ENCODE measurements at regions of chr22 and their contacts with region 1.

Region 1: GRCh38 chr22:22848364-22848866 is 39.2 kb upstream of the IGLL5 start:
- H3K4me3 ChIP-seq: no peak overlapping the region
- H3K27ac ChIP-seq: no peak overlapping the region
- H3K4me1 ChIP-seq: no peaks in the 10 kb centered on the region
- CTCF ChIP-seq: peak; percentile 81

Region 2: GRCh38 chr22:22687638-22688500 is 160.5 kb before region 1 on chr22:
- CTCF ChIA-PET with region 1: no interaction called
- POLR2A ChIA-PET with region 1: no interaction called
- H3K4me3 ChIP-seq: no peak overlapping the region
- H3K27ac ChIP-seq: no peak overlapping the region
- H3K4me1 ChIP-seq: no peaks in the 10 kb centered on the region
- CTCF ChIP-seq: peak; percentile 46; the same call in 1 of the 2 replicates

Region 3: GRCh38 chr22:22730655-22731373 is 117.6 kb before region 1 on chr22:
- CTCF ChIA-PET with region 1: no interaction called
- POLR2A ChIA-PET with region 1: no interaction called
- H3K4me3 ChIP-seq: no peak overlapping the region
- H3K27ac ChIP-seq: no peak overlapping the region
- H3K4me1 ChIP-seq: no peaks in the 10 kb centered on the region
- CTCF ChIP-seq: no peak

Region 4: DNA sequence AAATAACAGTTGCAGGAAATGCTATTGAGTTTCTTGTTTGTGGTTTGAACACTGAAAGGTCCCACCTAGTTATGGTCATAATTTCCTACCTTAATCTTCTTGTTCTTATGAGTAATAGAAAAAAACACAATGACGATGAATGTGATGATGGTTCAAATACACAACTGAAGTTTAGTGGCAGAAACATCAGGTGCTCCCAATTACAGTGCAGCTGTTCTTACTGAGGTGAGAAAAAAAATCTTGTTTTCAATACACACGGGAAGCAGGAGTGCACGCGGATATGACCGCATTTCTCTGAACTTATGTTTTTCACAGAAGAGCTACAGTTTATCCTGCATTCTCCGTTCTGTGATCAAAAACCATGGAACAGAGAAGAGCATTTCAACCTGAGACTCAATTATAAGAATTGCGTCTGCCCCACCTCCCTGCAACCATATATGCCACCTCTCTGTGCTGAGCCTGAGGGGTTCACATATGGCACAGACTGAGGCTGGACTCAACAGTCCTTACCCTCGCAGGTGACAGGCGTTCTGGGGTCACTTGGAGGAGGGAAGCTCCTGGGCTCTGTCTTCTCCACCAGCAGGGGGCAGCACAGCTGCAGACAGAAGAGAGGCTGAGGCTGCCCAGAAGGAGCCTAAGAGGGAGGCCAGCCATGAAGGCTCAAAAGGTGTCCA is 60.5 kb before region 1 on chr22:
- CTCF ChIA-PET with region 1: interaction called, 37 read pairs
- POLR2A ChIA-PET with region 1: no interaction called
- H3K4me3 ChIP-seq: no peak overlapping the region
- H3K27ac ChIP-seq: no peak overlapping the region
- H3K4me1 ChIP-seq: no peaks in the 10 kb centered on the region
- CTCF ChIP-seq: 0 out of 2 replicates have a peak, but pooled peaks have one; percentile 38

Region 5: DNA sequence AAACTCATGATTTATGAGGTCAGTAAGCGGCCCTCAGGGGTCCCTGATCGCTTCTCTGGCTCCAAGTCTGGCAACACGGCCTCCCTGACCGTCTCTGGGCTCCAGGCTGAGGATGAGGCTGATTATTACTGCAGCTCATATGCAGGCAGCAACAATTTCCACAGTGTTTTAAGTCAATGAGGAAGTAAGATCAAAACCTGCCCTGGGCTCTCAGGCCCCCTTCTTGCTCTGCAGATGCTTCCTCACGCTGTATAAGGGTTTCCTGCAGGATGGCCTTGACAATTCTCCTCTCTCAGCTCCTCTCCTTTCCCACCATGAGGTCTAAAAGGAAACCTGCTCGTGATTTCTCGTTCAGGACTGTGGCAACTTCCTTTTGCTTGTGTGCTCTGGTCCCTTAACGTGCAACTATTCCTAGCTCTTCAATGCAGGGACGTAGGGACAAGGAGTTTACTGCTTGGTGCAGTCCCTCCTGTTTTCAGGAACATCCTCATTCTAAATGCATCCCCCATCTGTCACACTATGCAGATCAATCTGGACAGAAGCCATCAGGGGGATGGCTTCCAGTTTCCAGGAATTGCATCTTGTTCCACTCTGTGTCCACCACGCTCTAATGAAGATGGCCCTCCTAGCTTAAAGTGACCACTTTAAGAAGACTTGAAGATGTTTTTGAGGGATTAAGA is 25.1 kb before region 1 on chr22:
- CTCF ChIA-PET with region 1: interaction called, 13 read pairs
- POLR2A ChIA-PET with region 1: no interaction called
- H3K4me3 ChIP-seq: no peak overlapping the region
- H3K27ac ChIP-seq: no peak overlapping the region
- H3K4me1 ChIP-seq: no peaks in the 10 kb centered on the region
- CTCF ChIP-seq: no peak

Region 6: DNA sequence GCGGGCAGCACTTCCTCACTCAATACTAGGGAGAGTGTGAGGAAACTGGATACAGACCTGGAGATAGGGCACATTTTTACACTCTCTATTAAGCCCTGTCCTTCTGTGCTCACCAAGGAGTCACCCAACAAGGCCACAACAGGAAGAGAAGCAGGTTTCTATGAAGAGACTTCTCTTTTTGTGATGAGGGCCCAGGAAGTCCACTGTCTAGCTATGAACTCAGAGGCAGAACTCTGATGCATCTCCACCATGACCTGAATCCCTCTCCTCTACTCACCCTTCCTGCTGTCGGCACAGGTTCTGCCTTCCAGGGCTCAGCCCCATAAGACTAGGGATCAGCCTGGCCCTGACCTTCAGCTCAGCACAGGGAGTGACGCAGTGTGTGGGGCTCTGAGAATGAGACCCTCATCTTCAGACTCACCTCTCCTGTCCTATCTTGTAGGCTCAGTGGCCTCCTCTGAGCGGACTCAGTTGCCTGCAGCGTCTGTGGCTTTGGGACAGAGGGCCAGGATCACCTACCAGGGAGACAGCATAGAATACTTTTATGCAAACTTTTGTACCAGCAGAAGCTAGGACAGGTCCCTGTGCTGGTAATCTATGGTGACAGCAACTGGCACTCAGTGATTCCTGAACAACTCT is 10.1 kb before region 1 on chr22:
- CTCF ChIA-PET with region 1: interaction called, 18 read pairs
- POLR2A ChIA-PET with region 1: no interaction called
- H3K4me3 ChIP-seq: no peak overlapping the region
- H3K27ac ChIP-seq: no peak overlapping the region
- H3K4me1 ChIP-seq: no peaks in the 10 kb centered on the region
- CTCF ChIP-seq: no peak

Region 7: GRCh38 chr22:22871516-22872278 is 23.3 kb after region 1 on chr22:
- CTCF ChIA-PET with region 1: interaction called, 32 read pairs
- POLR2A ChIA-PET with region 1: no interaction called
- H3K4me3 ChIP-seq: no peak overlapping the region
- H3K27ac ChIP-seq: no peak overlapping the region
- H3K4me1 ChIP-seq: no peaks in the 10 kb centered on the region
- CTCF ChIP-seq: no peak

Region 8: GRCh38 chr22:22893077-22893805 is 44.8 kb after region 1 on chr22:
- CTCF ChIA-PET with region 1: interaction called, 10 read pairs
- POLR2A ChIA-PET with region 1: no interaction called
- H3K4me3 ChIP-seq: no peak overlapping the region
- H3K27ac ChIP-seq: no peak overlapping the region
- H3K4me1 ChIP-seq: no peaks in the 10 kb centered on the region
- CTCF ChIP-seq: no peak

Region 9: DNA sequence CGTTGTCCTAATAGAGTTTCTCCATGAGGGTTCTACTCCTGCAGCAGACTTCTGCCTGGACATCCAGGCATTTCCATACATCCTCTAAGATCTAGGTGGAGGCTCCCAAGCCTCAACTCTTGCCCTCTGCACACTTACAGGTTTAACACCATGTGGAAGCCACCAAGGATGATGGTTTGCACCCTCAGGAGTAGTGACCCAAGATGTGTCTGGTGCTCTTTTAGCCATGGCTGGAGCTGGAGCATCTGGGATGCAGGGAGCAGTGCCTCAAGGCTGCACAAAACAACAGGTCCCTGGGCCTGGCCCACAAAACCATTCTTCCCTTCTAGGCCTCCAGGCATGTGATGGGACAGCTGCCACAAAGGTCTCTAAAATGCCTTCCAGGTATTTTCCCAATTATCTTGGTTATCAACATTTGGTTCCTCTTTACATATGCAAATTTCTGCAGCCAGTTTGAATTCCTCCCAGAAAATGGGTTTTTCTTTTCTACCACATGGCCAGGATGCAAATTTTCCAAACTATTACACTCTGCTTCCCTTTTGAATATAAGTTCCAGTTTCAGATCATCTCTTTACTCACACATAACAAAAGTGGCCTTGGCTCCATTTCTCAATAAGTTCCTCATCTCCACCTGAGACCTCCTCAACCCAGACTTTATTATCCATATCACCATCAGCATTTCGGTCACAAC is 152.4 kb after region 1 on chr22:
- CTCF ChIA-PET with region 1: no interaction called
- POLR2A ChIA-PET with region 1: no interaction called
- H3K4me3 ChIP-seq: no peak overlapping the region
- H3K27ac ChIP-seq: no peak overlapping the region
- H3K4me1 ChIP-seq: no peaks in the 10 kb centered on the region
- CTCF ChIP-seq: no peak

Region 10: DNA sequence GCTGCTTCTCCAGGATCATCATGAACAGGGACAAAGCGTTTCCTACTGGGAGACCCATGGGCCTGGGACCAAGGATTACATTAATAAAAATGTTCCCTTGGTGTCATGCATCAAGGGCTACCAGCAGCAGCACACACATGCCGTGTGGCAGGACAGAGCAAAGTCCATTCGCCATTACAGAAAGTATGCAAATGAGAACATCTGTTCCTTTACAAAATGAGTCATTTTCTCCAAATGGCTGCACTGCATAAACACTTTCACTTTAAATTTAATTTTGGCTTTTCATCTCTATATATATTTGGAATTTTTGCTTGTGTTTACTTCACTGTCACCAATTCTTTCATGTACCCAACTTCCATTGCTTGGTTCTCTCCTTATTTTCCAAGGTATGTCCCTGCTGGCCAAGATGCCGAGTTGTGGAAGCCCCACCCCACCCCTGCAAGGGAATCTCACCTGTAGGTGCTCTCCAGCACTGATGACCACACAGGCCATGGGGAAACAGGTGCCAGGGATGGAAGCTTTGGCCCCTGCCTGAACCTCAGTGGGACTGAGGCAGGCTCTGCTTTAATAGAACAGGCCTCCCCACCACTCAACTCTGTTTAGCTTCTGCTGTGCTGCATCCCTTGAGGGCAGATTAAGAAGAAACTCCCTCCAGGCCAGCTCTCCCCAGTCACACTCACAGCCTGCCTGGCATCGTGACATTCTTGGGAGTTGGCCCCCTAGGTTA is 206.3 kb after region 1 on chr22:
- CTCF ChIA-PET with region 1: no interaction called
- POLR2A ChIA-PET with region 1: no interaction called
- H3K4me3 ChIP-seq: no peak overlapping the region
- H3K27ac ChIP-seq: no peak overlapping the region
- H3K4me1 ChIP-seq: no peaks in the 10 kb centered on the region
- CTCF ChIP-seq: no peak

Measured in HEK293 (cell line).